ENCODE measurements at regions of chr19 and their contacts with region 1.

Region 1: GRCh38 chr19:42219812-42220750 is at the start of gene ZNF526:
- DNase-seq: peak; percentile 94 to 99 (median 96)
- ATAC-seq: peak; percentile 79
- H3K4me3 ChIP-seq: peak within 1 kb of the TSS; percentile 85 to 90
- H3K4me3 Mint-ChIP-seq: peak within 1 kb of the TSS; percentile 96
- H3K27ac ChIP-seq: peak within 1 kb of the TSS; percentile 72 to 73
- H3K27ac Mint-ChIP-seq: peak within 1 kb of the TSS; percentile 95
- H3K4me1 ChIP-seq: peaks cover 42% of the 10 kb centered on the region
- H3K4me1 Mint-ChIP-seq: peaks cover 52% of the 10 kb centered on the region
- H3K27me3 ChIP-seq: no peaks in the 10 kb centered on the region
- H3K27me3 Mint-ChIP-seq: no peaks in the 10 kb centered on the region
- CTCF ChIP-seq: no peak
- total RNA-seq, gene ZNF526: 8.7 to 9.4 TPM

Region 2: GRCh38 chr19:42184401-42184861 is 35.6 kb before region 1 on chr19:
- CTCF ChIA-PET with region 1: interaction called, 8 read pairs
- POLR2A ChIA-PET with region 1: no interaction called
- intact Hi-C with region 1: loop called in 1 of 2 experiments (anchors 1 kb)
- DNase-seq: peak; percentile 35 to 83 (median 74)
- ATAC-seq: peak; percentile 67
- H3K4me3 ChIP-seq: no peak overlapping the region
- H3K4me3 Mint-ChIP-seq: no peak overlapping the region
- H3K27ac ChIP-seq: peak overlapping the region in 1 of 2 experiments; percentile 33
- H3K27ac Mint-ChIP-seq: no peak overlapping the region
- H3K4me1 ChIP-seq: peaks cover 20% of the 10 kb centered on the region
- H3K4me1 Mint-ChIP-seq: peaks cover 41% of the 10 kb centered on the region
- H3K27me3 ChIP-seq: peaks cover 0 to 3% of the 10 kb centered on the region in 2 experiments
- H3K27me3 Mint-ChIP-seq: peaks cover 4% of the 10 kb centered on the region
- CTCF ChIP-seq: peak; percentile 81

Region 3: GRCh38 chr19:42199440-42200115 is 20.5 kb before region 1 on chr19:
- CTCF ChIA-PET with region 1: interaction called, 16 read pairs
- POLR2A ChIA-PET with region 1: interaction called, 19 read pairs
- intact Hi-C with region 1: loop called (anchors 1 kb)
- DNase-seq: peak in 7 of 9 experiments; percentile 36 to 80 (median 64)
- ATAC-seq: peak; percentile 30
- H3K4me3 ChIP-seq: peak overlapping the region; percentile 50 to 59
- H3K4me3 Mint-ChIP-seq: peak overlapping the region; percentile 87
- H3K27ac ChIP-seq: peak overlapping the region; percentile 88 to 93
- H3K27ac Mint-ChIP-seq: peak overlapping the region; percentile 95
- H3K4me1 ChIP-seq: peaks cover 84% of the 10 kb centered on the region
- H3K4me1 Mint-ChIP-seq: peaks cover 81% of the 10 kb centered on the region
- H3K27me3 ChIP-seq: no peaks in the 10 kb centered on the region
- H3K27me3 Mint-ChIP-seq: no peaks in the 10 kb centered on the region
- CTCF ChIP-seq: peak; percentile 29

Region 4: GRCh38 chr19:42254989-42255765 is 35.1 kb after region 1 on chr19 and contains the start of gene ERF:
- CTCF ChIA-PET with region 1: no interaction called
- POLR2A ChIA-PET with region 1: no interaction called
- intact Hi-C with region 1: loop called in 1 of 2 experiments (anchors 1 kb)
- DNase-seq: peak; percentile 89 to 97 (median 93)
- ATAC-seq: peak; percentile 71
- H3K4me3 ChIP-seq: peak within 1 kb of the TSS; percentile 85 to 97
- H3K4me3 Mint-ChIP-seq: peak within 1 kb of the TSS; percentile 86
- H3K27ac ChIP-seq: peak within 1 kb of the TSS; percentile 96 to 97
- H3K27ac Mint-ChIP-seq: peak within 1 kb of the TSS; percentile 87
- H3K4me1 ChIP-seq: peaks cover 36% of the 10 kb centered on the region
- H3K4me1 Mint-ChIP-seq: peaks cover 27% of the 10 kb centered on the region
- H3K27me3 ChIP-seq: no peaks in the 10 kb centered on the region
- H3K27me3 Mint-ChIP-seq: no peaks in the 10 kb centered on the region
- CTCF ChIP-seq: no peak
- total RNA-seq, gene ERF: 92.1 to 95.1 TPM

Region 5: DNA sequence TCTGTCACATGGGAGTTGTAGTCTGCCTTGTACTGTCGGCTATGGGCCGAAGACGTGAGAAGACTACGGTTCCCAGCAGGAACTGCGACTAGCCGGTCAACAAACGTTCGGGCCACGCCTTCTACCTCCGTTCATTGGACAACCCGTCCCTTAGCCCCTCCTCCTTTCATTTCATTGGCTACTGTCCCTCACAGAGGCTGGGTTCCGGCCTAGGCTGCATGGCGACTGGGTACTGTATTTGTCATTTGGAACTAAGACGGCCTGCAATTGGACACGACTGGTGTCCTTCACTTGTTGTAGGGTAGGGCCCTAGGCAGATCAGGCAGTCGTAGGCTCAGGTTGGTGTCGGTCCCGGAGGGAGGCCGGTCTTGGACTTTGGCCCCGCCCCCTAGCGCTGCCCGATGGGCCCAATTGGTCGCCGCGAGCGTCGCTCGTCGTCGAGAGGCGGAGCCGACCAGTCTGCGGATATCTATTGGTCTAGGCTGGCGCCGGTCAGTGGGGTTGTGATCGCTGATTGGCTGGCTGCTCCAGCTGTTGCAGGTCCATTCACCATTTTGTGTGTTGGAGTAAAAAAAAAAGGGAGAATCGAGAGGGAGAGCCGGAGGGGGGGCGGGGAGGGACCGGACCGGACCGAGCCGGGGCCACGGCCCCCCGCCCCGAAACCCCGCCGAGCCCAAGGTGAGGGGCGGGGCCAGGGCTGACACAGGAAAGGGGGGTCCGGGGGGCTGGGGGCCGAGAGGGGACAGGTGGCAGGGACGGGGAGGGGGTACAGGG is 48.8 kb after region 1 on chr19 and contains the start of gene CIC:
- CTCF ChIA-PET with region 1: no interaction called
- POLR2A ChIA-PET with region 1: no interaction called
- intact Hi-C with region 1: loop called (anchors 1 kb)
- DNase-seq: peak; percentile 97 to 100 (median 99)
- ATAC-seq: peak; percentile 70
- H3K4me3 ChIP-seq: peak within 1 kb of the TSS; percentile 70 to 83
- H3K4me3 Mint-ChIP-seq: peak within 1 kb of the TSS; percentile 86
- H3K27ac ChIP-seq: peak within 1 kb of the TSS; percentile 93 to 99
- H3K27ac Mint-ChIP-seq: peak within 1 kb of the TSS; percentile 97
- H3K4me1 ChIP-seq: peaks cover 29% of the 10 kb centered on the region
- H3K4me1 Mint-ChIP-seq: peaks cover 34% of the 10 kb centered on the region
- H3K27me3 ChIP-seq: no peaks in the 10 kb centered on the region
- H3K27me3 Mint-ChIP-seq: no peaks in the 10 kb centered on the region
- CTCF ChIP-seq: no peak
- total RNA-seq, gene CIC: 111 to 112 TPM

Region 6: DNA sequence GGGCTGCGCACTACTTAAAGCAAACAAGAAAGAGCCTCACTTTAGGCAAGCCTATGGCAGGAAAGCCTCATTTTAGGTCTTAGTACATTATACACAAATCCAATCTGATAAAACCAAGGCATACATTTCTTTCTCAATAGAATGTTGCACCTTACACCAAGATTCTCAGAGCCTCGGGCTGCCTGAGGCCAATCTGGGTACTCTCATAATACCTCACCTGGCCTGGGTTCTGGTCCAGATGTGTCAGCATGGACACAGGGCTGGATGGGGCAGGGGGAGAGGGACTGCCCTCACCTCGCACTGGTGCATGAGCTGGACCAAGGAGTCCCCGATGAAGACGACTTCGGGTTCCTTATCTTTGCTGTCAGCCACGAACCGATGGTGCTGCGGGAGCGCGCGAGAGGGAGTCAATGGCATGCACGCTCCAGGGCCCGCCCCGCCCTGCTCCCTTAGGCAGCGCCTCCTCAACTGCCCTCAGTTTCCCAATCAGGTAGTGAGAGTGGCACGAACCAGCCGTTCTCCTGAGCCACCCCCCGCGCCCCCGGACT is 81.6 kb after region 1 on chr19 and contains the start of gene PRR19:
- CTCF ChIA-PET with region 1: no interaction called
- POLR2A ChIA-PET with region 1: no interaction called
- intact Hi-C with region 1: loop called in 1 of 2 experiments (anchors 5 kb)
- DNase-seq: peak in 1 of 9 experiments; percentile 46
- ATAC-seq: peak; percentile 5
- H3K4me3 ChIP-seq: peak within 1 kb of the TSS; percentile 88 to 89
- H3K4me3 Mint-ChIP-seq: peak within 1 kb of the TSS; percentile 87
- H3K27ac ChIP-seq: peak within 1 kb of the TSS; percentile 37 to 56
- H3K27ac Mint-ChIP-seq: peak within 1 kb of the TSS; percentile 49
- H3K4me1 ChIP-seq: peaks cover 19% of the 10 kb centered on the region
- H3K4me1 Mint-ChIP-seq: peaks cover 28% of the 10 kb centered on the region
- H3K27me3 ChIP-seq: no peaks in the 10 kb centered on the region
- H3K27me3 Mint-ChIP-seq: no peaks in the 10 kb centered on the region
- CTCF ChIP-seq: no peak
- total RNA-seq, gene PRR19: 0.19 TPM in 1 of 2 experiments, not detected in the other

Region 7: GRCh38 chr19:42325273-42325895 is 105.3 kb after region 1 on chr19 and contains the start of gene MEGF8:
- CTCF ChIA-PET with region 1: no interaction called
- POLR2A ChIA-PET with region 1: no interaction called
- intact Hi-C with region 1: loop called in 1 of 2 experiments (anchors 1 kb)
- DNase-seq: peak; percentile 96 to 99 (median 98)
- ATAC-seq: peak; percentile 93
- H3K4me3 ChIP-seq: peak within 1 kb of the TSS; percentile 85 to 98
- H3K4me3 Mint-ChIP-seq: peak within 1 kb of the TSS; percentile 97
- H3K27ac ChIP-seq: peak within 1 kb of the TSS; percentile 36 to 56
- H3K27ac Mint-ChIP-seq: peak within 1 kb of the TSS; percentile 88
- H3K4me1 ChIP-seq: peaks cover 12% of the 10 kb centered on the region
- H3K4me1 Mint-ChIP-seq: peaks cover 24% of the 10 kb centered on the region
- H3K27me3 ChIP-seq: peaks cover 4 to 7% of the 10 kb centered on the region in 2 experiments
- H3K27me3 Mint-ChIP-seq: peaks cover 12% of the 10 kb centered on the region
- CTCF ChIP-seq: peak; percentile 66
- total RNA-seq, gene MEGF8: 5.2 to 5.9 TPM